ENCODE measurements at regions of chr7 and their contacts with region 1.

Region 1: DNA sequence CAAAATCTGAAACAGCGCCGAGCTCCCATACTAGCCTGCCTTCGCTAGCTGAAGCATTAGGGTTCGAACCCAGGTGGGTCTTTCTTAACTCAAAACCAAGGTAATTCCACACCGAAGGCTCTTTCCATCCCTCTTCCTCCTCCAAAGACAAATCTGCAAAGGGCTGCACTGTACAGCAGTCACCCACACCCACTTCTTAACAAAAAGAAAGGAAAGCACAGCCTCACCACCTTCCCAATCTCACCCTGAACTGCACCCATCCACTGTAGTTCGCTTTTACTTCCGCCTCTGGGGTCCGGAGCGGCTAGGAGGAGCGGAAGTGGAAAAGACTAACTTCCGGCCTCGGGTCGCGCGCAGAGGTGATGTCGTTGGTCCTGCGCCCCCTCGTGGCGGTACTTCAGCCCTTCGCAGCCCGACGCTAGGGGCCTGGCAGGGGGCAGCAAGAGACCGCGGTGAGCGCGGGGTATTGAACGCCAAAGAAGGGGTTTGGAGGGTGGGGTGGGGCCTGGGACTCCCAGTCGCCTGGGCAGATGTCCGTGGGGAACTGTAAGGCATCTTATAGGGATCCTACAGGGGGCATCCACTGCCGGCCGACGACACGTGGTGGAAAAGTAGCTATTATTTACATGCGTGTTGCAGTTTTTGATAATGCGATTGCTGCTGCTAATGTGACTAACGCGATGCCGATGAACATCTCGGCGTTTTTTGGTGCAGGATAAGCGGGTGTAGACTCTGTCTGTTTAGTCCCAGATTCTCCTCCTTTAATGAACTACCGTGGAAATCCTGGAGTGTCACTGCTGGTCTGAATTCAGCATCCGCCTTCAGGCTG is at the start of gene MTERF1:
- DNase-seq: peak; percentile 95
- ATAC-seq: peak; percentile 99 to 100
- total RNA-seq, gene MTERF1: 5.5 to 8.7 TPM

Region 2: GRCh38 chr7:91182819-91183764 is 697.5 kb before region 1 on chr7:
- intact Hi-C with region 1: no loop called
- DNase-seq: no peak
- ATAC-seq: peak in 1 of 2 donors; percentile 98

Region 3: GRCh38 chr7:91940572-91941341 is 60.1 kb after region 1 on chr7 and contains the start of gene AKAP9:
- intact Hi-C with region 1: loop called in 1 of 2 experiments (anchors 2 kb)
- DNase-seq: peak; percentile 94
- ATAC-seq: peak; percentile 94 to 98
- total RNA-seq, gene AKAP9: 27.3 to 37.4 TPM

Region 4: GRCh38 chr7:91973639-91974038 is 93.0 kb after region 1 on chr7:
- intact Hi-C with region 1: no loop called
- DNase-seq: no peak
- ATAC-seq: no peak

Region 5: GRCh38 chr7:92042056-92042737 is 161.6 kb after region 1 on chr7:
- intact Hi-C with region 1: loop called in 1 of 2 experiments (anchors 10 kb)
- DNase-seq: no peak
- ATAC-seq: no peak

Measured in left cardiac atrium (tissue), 4 donors.